OCI-LY7 (cell line): ENCODE measurements at regions of chr1 and their contacts with region 1.

Region 1: GRCh38 chr1:241579426-241579825 is 47.2 kb downstream of the KMO start:
- DNase-seq: no peak
- H3K4me3 ChIP-seq: no peak overlapping the region
- H3K27ac ChIP-seq: no peak overlapping the region
- H3K4me1 ChIP-seq: no peaks in the 10 kb centered on the region
- CTCF ChIP-seq: no peak

Region 2: DNA sequence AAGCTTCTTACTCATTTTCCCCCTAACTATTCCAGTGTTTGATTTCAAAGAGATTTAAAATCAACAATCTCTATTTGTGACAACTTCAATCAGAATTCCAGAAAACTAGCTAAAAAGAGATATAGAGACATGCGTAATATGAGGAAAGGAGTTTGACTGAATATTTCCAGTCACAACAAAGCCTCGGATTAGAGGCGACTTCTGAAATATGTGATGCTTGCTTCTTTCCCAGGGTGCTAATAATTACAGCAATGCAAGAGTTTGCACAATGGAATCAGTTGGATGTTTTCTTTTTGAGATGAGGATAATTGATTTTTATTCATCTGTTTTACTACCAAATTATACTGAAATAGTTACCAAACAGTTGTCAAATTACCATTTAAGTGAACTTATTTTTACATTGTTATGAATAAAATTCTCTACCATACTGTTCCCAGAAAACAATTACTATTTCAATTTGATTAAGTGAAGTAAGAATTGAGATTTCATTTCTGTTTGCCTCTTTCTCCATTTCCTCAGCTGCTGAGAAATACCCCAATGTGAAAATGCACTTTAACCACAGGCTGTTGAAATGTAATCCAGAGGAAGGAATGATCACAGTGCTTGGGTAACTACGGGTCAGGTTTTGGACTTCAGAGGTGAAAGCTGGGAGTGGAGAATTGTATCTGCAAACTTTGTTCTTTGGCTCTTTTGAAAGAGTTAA is 19.1 kb before region 1 on chr1:
- CTCF ChIA-PET with region 1: no interaction called
- POLR2A ChIA-PET with region 1: no interaction called
- intact Hi-C with region 1: no loop called
- DNase-seq: no peak
- H3K4me3 ChIP-seq: no peak overlapping the region
- H3K27ac ChIP-seq: no peak overlapping the region
- H3K4me1 ChIP-seq: no peaks in the 10 kb centered on the region
- CTCF ChIP-seq: no peak

Region 3: GRCh38 chr1:241591326-241591725 is 11.9 kb after region 1 on chr1:
- CTCF ChIA-PET with region 1: no interaction called
- POLR2A ChIA-PET with region 1: interaction called, 11 read pairs
- intact Hi-C with region 1: no loop called
- DNase-seq: no peak
- H3K4me3 ChIP-seq: no peak overlapping the region
- H3K27ac ChIP-seq: no peak overlapping the region
- H3K4me1 ChIP-seq: no peaks in the 10 kb centered on the region
- CTCF ChIP-seq: no peak